Tibial artery (tissue), 4 donors: ENCODE measurements at regions of chr6 and their contacts with region 1.

Region 1: DNA sequence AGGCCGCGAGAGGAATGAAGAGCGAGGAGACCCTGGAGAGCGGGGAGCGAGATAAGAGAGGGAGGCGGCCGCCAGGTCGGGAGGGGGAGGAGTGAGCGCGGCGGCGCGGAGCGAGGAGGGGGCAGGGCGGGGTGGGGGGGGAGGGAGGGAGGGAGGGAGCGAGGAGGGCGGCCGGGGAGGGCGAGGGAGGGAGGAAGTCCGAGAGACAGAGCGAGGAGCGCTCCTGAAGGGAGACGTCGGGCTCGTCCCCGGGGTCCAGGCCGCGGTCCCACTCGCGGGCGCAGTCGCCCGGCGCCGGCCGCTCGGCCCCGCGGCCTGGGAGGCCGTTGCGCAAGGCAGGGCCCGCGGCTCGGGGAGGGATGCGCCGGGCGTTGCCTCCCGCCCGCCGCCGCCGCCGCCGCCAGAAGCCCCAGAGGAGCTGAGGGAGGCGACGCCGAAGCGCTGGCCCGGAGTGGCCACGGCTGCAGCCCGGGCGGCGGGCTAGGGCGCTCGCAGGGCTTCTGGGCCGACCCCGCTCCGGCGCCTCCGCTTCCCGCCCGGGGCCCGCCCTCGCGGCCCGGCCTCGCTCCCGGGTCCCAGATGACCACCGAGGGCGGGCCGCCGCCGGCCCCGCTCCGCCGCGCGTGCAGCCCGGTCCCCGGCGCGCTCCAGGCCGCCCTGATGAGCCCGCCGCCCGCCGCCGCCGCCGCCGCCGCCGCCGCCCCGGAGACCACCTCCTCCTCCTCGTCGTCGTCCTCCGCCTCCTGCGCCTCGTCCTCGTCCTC is at the start of gene FOXF2:
- DNase-seq: no peak
- H3K4me3 ChIP-seq: peak within 1 kb of the TSS; percentile 43
- H3K27ac ChIP-seq: no peak within 1 kb of the TSS
- H3K4me1 ChIP-seq: peaks cover 0 to 49% (median 39%) of the 10 kb centered on the region in 4 donors
- H3K27me3 ChIP-seq: peaks cover 0 to 98% of the 10 kb centered on the region in 2 donors
- CTCF ChIP-seq: no peak

Region 2: DNA sequence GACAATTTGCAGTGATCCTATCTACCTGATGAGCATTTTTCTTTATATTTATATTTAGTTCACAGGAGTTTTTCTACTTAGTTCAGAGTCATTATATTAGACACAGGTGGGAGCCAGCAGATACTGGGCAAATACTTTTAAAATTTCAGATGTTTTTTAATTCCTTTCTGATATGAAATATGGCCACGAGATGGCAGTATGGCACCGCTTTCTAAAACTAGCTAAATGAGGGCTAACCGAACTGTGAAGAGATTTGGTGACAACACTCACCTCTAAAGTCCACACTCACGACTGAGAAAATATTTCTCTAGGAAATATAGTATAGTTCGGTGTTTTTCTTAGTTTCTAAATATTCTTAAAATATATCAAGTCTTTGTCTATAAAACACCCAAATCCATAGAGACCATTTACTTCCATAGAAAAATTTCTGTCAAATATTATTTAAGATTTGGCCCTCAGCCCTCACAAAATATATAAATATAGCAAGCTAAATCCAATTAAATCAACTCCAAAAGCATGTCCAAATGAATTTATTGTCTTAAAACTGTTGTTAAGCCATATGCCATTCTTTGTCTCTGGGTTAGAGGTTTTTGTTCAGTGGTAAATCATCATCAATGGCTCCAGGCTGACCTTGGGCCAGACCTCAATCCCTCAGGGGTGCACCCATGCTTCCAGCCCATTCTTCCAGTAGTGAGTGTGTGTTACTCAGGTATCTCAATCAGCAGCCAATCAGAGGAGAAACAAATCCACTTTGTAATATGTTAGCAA is 796.2 kb before region 1 on chr6:
- intact Hi-C with region 1: loop called (anchors 5 kb)
- DNase-seq: peak in 1 of 2 donors; percentile 48
- H3K4me3 ChIP-seq: no peak overlapping the region
- H3K27ac ChIP-seq: no peak overlapping the region
- H3K4me1 ChIP-seq: no peaks in the 10 kb centered on the region
- H3K27me3 ChIP-seq: no peaks in the 10 kb centered on the region
- CTCF ChIP-seq: peak; percentile 70 to 71